IMR-90 (cell line): ENCODE measurements at regions of chr3 and their contacts with region 1.

Region 1: DNA sequence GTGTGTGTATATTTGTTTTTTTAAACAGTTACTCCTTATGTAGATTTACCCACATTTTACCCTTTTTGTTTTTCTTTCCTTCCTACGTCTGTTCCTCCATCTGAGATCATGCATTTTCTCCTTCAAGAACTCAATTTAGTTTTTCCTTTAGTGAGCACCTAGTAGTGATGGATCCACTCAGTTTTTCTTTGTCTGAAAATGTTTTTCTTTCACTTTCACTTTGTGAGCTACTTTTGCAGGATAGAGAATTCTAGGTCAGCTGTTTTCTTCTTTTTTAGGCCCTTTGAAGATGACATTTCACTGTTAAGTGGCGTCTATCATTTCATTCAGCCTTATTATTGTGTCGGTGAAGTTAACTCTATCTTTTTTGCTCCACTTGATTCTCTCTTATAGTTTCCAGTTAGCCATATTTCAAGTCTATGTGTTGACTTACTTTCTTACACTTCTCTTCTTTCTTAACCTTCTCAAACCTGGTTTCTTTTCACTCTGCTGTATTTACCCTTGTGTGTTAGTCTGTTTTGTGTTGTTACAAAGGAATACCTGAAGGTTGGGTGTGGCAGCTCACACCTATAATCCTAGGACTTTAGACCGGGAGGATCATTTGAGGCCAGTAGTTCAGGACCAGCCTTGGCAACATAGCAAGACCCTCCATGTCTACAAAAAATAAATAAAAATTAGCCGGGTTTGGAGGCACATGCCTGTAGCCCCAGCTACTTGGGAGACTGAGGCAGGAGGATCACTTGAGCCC is 55.8 kb downstream of the PRKCI start:
- DNase-seq: no peak
- ATAC-seq: no peak
- H3K4me3 ChIP-seq: no peak overlapping the region
- H3K27ac ChIP-seq: no peak overlapping the region
- H3K4me1 ChIP-seq: peaks cover 6% of the 10 kb centered on the region
- H3K27me3 ChIP-seq: no peaks in the 10 kb centered on the region
- CTCF ChIP-seq: no peak
- POLR2A ChIP-seq: no peak
- RAD21 ChIP-seq: no peak

Region 2: DNA sequence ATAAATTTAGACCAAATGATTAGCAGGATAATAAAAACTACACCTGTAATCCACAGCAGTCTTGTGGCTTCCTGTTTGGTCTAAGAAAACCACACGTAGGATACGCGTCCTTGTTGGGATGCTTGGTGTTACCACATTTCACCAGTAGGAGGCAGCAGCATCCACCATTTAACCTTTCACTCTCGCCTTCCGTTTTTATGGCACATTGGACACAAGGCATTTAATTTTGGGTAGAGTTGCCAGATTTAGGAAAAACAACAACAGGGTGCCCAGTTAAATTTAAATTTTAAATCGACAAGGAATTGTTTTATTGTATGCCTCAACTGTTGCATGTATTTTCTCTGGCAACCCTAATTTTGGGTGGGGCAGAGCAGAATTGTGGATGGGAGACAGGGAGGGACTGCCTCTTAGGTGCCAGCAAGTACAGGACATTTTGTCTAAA is 414.5 kb before region 1 on chr3:
- CTCF ChIA-PET with region 1: no interaction called
- POLR2A ChIA-PET with region 1: no interaction called
- dilution Hi-C with region 1: no loop called
- in situ Hi-C with region 1: no loop called
- intact Hi-C with region 1: loop called (anchors 5 kb)
- DNase-seq: peak; percentile 72
- ATAC-seq: peak; percentile 95
- H3K4me3 ChIP-seq: no peak overlapping the region
- H3K27ac ChIP-seq: no peak overlapping the region
- H3K4me1 ChIP-seq: no peaks in the 10 kb centered on the region
- H3K27me3 ChIP-seq: peaks cover 4% of the 10 kb centered on the region; the same call in 1 of the 2 replicates
- CTCF ChIP-seq: peak; percentile 82
- POLR2A ChIP-seq: no peak
- RAD21 ChIP-seq: peak; percentile 85

Region 3: DNA sequence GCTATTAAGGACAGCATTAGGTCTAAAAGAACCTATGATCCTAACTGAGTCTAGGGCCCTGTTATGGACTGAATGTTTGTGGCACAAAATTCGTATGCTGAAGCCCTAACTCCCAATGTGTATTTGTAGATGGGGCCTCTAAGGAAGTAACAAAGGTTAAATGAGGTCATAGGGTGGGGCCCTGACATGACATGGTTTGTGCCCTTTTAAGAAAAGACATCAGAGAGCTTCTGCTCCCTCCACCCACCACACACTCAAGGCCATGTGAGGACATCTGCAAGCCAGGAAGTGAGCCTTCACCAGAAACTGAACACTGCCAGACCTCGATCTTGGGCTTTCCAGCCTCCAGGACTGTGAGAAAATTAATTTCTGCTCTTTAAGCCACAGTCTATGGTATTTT is 145.7 kb before region 1 on chr3:
- CTCF ChIA-PET with region 1: no interaction called
- POLR2A ChIA-PET with region 1: no interaction called
- dilution Hi-C with region 1: no loop called
- in situ Hi-C with region 1: no loop called
- intact Hi-C with region 1: no loop called
- DNase-seq: no peak
- ATAC-seq: no peak
- H3K4me3 ChIP-seq: no peak overlapping the region
- H3K27ac ChIP-seq: no peak overlapping the region
- H3K4me1 ChIP-seq: peaks cover 2% of the 10 kb centered on the region
- H3K27me3 ChIP-seq: no peaks in the 10 kb centered on the region
- CTCF ChIP-seq: no peak
- POLR2A ChIP-seq: no peak
- RAD21 ChIP-seq: no peak

Region 4: DNA sequence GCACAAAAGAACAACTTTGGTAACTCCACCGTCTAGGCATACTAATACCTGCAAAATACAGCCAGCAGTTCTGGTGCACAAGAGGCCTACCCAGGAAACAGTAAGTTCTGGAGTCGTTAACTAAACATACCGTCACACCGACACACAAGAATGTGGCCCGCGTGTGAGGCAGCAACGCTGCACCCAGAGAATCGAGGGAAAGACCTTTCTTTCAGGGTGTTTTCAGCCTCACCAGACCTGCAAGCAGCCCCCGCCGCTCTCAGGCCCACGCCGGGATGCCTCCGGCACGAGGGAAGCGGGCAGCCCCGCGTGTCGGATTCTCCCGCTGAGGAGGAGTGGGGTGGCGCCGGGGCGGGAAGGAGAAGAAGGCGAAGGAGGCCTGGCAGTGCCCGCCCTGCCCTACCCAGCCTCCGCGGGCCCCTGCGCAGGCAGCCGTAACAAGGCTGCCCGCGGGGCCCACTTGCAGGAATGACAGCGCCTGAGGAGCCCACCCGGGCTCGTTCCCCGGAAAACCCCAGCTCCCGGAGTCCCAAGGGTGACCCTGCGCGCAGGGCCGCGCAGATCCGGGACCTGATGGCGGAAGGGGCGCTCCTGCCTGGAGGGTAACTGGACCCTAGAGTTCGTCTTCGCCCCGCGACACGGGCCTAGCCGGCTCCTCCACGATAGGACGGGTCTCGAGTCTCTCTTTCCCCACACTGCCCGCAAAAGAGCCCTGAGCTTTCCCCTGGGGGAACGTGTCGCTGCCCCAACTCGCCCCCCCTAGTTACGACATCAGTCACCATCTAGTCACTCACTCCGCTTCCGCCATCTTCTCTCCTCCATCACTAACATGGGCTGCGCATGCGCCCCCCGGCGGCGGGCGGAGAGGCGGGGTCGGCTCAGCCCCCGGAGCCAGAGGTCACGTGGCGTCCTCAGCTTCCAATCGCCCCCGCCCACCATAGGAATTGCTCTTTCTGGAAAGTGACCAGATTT is 96.8 kb before region 1 on chr3 and contains the start of gene PHC3:
- CTCF ChIA-PET with region 1: no interaction called
- POLR2A ChIA-PET with region 1: no interaction called
- dilution Hi-C with region 1: no loop called
- in situ Hi-C with region 1: no loop called
- intact Hi-C with region 1: loop called (anchors 2 kb)
- DNase-seq: peak; percentile 85
- ATAC-seq: peak; percentile 84
- H3K4me3 ChIP-seq: peak within 1 kb of the TSS; percentile 92
- H3K27ac ChIP-seq: peak within 1 kb of the TSS; percentile 99
- H3K4me1 ChIP-seq: peaks cover 2% of the 10 kb centered on the region; the same call in 1 of the 2 replicates
- H3K27me3 ChIP-seq: no peaks in the 10 kb centered on the region
- CTCF ChIP-seq: no peak
- POLR2A ChIP-seq: peak; percentile 74; the same call in 1 of the 2 replicates
- RAD21 ChIP-seq: no peak
- total RNA-seq, gene PHC3: 17.5 and 26.3 TPM in 2 replicates

Region 5: DNA sequence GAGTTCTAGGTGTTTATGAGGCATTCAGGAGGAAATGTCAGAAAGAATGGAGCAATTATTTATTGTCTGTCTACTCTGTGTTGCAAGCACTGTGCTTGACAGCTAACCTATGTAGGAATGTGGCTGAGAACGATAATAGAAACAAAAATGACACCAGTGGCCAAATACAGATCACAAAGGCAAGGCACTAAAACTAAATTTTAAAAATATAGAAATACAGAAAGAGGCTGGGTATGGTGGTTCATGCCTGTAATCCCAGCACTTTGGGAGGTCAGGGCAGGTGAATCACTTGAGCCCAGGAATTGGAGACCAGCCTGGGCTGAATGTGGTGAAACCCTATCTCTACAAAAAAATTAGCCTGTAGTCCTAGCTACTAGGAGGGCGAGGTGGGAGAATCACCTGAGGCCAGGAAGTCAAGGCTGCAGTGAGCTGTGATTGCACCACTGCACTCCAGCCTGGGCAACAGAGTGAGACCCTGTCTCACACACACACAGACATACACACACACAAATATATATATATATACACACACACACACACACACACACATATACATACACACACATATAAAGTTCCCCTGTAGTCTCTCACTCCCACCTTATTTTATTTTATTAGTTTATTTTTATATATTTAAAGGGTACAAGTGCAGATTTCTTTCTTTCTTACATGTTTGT is 49.8 kb before region 1 on chr3:
- CTCF ChIA-PET with region 1: no interaction called
- POLR2A ChIA-PET with region 1: no interaction called
- dilution Hi-C with region 1: no loop called
- in situ Hi-C with region 1: no loop called
- intact Hi-C with region 1: loop called (anchors 5 kb)
- DNase-seq: peak; percentile 20
- ATAC-seq: peak; percentile 46
- H3K4me3 ChIP-seq: no peak overlapping the region
- H3K27ac ChIP-seq: peak overlapping the region; percentile 48; the same call in 1 of the 2 replicates
- H3K4me1 ChIP-seq: peaks cover 32% of the 10 kb centered on the region
- H3K27me3 ChIP-seq: no peaks in the 10 kb centered on the region
- CTCF ChIP-seq: no peak
- POLR2A ChIP-seq: no peak
- RAD21 ChIP-seq: no peak

Region 6: GRCh38 chr3:170290194-170290593 is 12.2 kb after region 1 on chr3:
- CTCF ChIA-PET with region 1: interaction called, 11 read pairs
- POLR2A ChIA-PET with region 1: no interaction called
- dilution Hi-C with region 1: no loop called
- in situ Hi-C with region 1: no loop called
- intact Hi-C with region 1: no loop called
- DNase-seq: no peak
- ATAC-seq: no peak
- H3K4me3 ChIP-seq: no peak overlapping the region
- H3K27ac ChIP-seq: no peak overlapping the region
- H3K4me1 ChIP-seq: no peaks in the 10 kb centered on the region
- H3K27me3 ChIP-seq: no peaks in the 10 kb centered on the region
- CTCF ChIP-seq: no peak
- POLR2A ChIP-seq: no peak
- RAD21 ChIP-seq: no peak